Esophagus muscularis mucosa (tissue), 4 donors: ENCODE measurements at regions of chr6 and their contacts with region 1.

Region 1: GRCh38 chr6:16319813-16320532 is 81.6 kb downstream of the GMPR start:
- DNase-seq: no peak
- H3K4me3 ChIP-seq: peak overlapping the region; percentile 19 to 37 (median 30)
- H3K27ac ChIP-seq: peak overlapping the region; percentile 69 to 85 (median 81)
- H3K4me1 ChIP-seq: peaks cover 63 to 78% (median 74%) of the 10 kb centered on the region in 4 donors
- H3K27me3 ChIP-seq: no peaks in the 10 kb centered on the region
- CTCF ChIP-seq: no peak
- EP300 ChIP-seq: no peak
- POLR2A ChIP-seq: no peak

Region 2: GRCh38 chr6:16244869-16245451 is 75.0 kb before region 1 on chr6:
- intact Hi-C with region 1: loop called (anchors 2 kb)
- DNase-seq: no peak
- H3K4me3 ChIP-seq: peak overlapping the region in 2 of 4 donors; percentile 4 to 17
- H3K27ac ChIP-seq: peak overlapping the region; percentile 59 to 73 (median 66)
- H3K4me1 ChIP-seq: peaks cover 48 to 60% (median 52%) of the 10 kb centered on the region in 4 donors
- H3K27me3 ChIP-seq: no peaks in the 10 kb centered on the region
- CTCF ChIP-seq: no peak
- EP300 ChIP-seq: no peak
- POLR2A ChIP-seq: no peak

Region 3: GRCh38 chr6:16704401-16705045 is 384.6 kb after region 1 on chr6:
- intact Hi-C with region 1: no loop called
- DNase-seq: no peak
- H3K4me3 ChIP-seq: peak overlapping the region in 3 of 4 donors; percentile 12 to 30 (median 27)
- H3K27ac ChIP-seq: peak overlapping the region in 1 of 4 donors; percentile 45
- H3K4me1 ChIP-seq: peaks cover 31 to 53% (median 48%) of the 10 kb centered on the region in 4 donors
- H3K27me3 ChIP-seq: no peaks in the 10 kb centered on the region
- CTCF ChIP-seq: no peak
- EP300 ChIP-seq: no peak
- POLR2A ChIP-seq: no peak